ENCODE measurements at regions of chr1 and their contacts with region 1.

Region 1: DNA sequence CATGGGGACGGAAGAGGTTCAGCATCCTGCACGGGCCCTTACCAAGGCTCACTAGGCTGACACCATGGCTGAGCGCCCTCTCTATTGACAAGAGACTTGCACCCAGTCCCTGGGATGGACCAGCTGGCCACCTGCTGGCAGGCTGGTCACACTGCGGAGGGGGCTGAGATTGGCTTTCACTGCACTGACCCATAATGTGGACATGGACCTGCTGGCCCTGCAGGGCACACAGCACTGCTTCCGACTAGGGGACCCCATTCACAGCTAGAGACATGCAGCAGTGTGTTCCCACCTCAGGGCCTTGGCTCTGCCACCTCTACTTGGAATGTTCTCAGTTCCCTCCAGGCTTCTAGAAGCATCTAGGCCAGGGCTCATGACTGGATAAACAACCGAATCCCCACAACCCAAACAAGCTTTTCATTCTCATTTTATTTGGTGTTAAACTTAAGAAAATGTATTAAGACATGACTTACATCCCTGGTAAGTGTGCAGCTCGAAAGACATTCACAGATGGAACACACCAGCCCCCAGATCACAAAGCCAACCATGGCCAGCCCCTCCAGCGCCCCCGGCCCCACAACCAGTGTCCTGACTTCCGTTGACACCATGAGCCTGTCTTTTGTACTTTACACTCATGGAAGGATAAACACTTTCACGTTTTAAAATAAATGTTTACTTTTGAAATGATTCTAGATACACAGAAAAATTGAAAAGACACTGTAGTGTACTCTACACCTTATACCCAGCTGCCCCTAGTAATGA is 9.3 kb upstream of the SRARP start:
- DNase-seq: peak; percentile 64
- CTCF ChIP-seq: peak; percentile 78

Region 2: DNA sequence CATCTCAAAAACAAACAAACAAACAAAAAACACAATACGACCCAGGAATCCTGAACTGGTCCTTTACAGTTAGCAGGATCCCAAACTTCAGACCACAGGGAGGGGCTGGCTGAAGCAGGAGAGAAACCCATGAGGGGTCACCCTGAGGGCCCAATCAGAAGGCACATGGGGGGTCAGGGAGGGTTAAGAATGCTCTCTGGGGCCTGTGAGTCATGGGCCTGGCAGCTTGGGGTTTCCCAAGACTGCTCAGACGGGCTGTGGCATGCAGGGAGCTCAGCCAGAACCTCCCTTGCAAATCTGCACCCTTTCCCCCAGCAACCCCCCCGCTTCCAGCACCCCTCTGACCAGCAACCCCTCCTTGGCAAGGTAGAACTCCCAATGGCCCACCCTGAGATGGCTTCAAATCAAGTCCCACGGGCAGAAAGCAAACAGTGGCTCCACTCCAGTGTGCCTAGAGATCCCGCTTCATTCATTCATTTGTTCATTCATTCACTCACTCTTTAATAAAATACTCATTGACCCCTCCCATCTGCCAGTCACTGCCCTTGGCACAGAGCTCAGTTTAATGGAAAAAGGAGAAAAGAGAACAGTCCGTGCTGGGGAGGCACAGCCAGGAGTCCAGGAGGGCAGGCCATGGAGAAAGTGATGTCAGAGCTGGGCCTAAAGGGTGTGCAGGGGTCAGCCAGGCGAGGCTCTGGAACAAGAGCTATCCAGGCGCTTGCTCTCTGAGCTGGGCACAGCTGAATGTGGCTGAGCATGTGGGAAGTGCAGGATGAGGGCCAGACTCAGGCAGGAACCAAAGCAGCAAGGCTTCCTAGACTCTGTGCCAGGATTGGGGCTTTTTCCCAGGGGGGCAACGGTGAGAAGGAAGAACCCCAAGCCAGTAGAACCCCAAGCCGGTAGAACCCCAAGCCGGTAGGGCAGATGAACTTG is 195.5 kb before region 1 on chr1:
- CTCF ChIA-PET with region 1: interaction called, 10 read pairs
- POLR2A ChIA-PET with region 1: no interaction called
- DNase-seq: no peak
- CTCF ChIP-seq: no peak

Region 3: GRCh38 chr1:15820478-15820877 is 174.3 kb before region 1 on chr1:
- CTCF ChIA-PET with region 1: interaction called, 22 read pairs
- POLR2A ChIA-PET with region 1: no interaction called
- DNase-seq: no peak
- CTCF ChIP-seq: no peak